ENCODE measurements at regions of chr18 and their contacts with region 1.

Region 1: DNA sequence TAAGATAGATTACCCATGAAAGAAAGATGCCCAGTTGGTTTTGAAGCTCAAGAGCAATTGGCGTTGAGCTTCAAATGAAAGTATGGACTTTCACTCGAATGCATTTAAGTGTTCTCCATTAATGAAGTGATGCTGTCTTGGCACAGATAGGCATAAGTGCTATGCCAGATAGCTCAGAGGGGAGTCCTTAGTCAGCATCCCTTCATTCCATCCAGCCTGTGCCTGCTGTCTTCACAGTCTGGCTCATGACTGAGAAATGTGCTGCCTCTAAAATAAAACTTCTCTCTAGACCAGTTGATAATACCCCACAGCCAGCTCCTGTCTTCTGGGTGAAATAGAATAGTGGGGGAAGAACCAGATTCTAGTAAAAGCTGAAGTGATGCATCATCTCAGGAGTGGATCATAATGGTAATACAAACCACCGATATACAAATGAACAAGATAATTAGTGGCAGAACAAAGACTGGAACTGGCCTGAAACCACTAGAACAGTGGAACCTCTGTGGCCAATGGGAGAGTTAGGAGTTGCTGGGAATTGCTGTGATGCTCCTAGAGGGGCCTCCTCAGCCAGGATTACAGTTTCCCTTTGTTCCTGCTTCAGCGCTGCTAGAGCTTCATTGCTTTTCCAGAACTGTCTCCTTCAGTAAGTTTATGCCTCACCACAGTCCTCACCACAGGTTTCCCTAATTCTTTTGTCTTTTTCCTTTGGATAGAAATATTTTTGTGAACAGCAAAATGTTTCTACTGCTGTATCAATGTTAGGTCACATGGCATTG is 359.3 kb downstream of the KIAA1328 start:
- DNase-seq: no peak
- CTCF ChIP-seq: no peak

Region 2: DNA sequence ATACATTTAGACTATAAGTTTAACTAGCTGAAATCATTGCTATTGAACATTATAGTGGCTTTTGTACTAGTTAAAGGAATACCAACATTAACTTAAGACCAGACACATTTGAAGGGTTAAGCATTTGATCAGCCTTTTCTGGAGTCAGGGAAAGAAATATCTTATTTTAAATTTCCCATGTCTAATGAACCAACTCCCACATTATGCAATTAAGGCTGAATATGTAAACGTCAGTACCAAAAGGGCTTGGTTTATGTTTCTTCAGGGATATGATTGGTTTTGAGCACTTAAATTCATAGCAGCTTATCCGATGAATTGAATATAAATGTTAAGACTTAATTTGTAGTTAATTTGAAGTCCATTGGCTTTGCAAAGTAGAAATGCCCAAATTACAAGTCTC is 14.8 kb before region 1 on chr18:
- CTCF ChIA-PET with region 1: interaction called, 11 read pairs
- POLR2A ChIA-PET with region 1: no interaction called
- DNase-seq: no peak
- CTCF ChIP-seq: no peak

Region 3: DNA sequence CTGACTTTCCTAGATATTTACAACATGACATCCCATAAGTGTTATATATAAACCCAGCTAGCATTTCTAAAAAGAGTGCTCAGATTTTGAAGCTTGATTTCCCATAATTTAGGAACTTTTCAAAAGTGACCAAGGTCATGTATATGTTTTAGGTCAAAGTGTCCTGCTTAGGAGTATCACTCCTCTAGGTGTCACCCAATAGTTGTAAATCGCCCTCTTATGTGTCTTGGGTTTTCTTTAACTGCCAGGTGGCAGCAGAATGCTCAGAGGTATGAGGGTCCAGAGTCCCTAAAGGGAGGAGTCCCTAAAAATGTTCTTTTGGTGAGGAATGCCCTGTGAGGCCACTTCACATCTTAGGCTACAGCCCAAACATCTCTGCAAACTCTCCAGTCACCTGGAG is 19.1 kb after region 1 on chr18:
- CTCF ChIA-PET with region 1: interaction called, 13 read pairs
- POLR2A ChIA-PET with region 1: no interaction called
- DNase-seq: no peak
- CTCF ChIP-seq: no peak

Measured in GM10248 (cell line).